GM12878 (cell line): ENCODE measurements at regions of chr19 and their contacts with region 1.

Region 1: GRCh38 chr19:16467581-16467980 is 4.2 kb downstream of the EPS15L1 start:
- DNase-seq: no peak
- ATAC-seq: no peak
- H3K4me3 ChIP-seq: no peak overlapping the region
- H3K27ac ChIP-seq: no peak overlapping the region; the same call in 1 of the 2 replicates
- H3K4me1 ChIP-seq: peaks cover 20% of the 10 kb centered on the region; the same call in 1 of the 2 replicates
- H3K27me3 ChIP-seq: no peaks in the 10 kb centered on the region
- CTCF ChIP-seq: no peak
- EP300 ChIP-seq: no peak
- POLR2A ChIP-seq: no peak
- RAD21 ChIP-seq: no peak

Region 2: GRCh38 chr19:16452347-16452878 is 15.2 kb before region 1 on chr19:
- CTCF ChIA-PET with region 1: interaction called, 5 read pairs
- POLR2A ChIA-PET with region 1: interaction called, 14 read pairs
- RAD21 ChIA-PET with region 1: interaction called, 4 read pairs
- SMC1A ChIA-PET with region 1: interaction called, 9 read pairs
- in situ Hi-C with region 1: no loop called
- intact Hi-C with region 1: no loop called
- DNase-seq: no peak
- ATAC-seq: no peak
- H3K4me3 ChIP-seq: no peak overlapping the region
- H3K27ac ChIP-seq: no peak overlapping the region
- H3K4me1 ChIP-seq: peaks cover 48% of the 10 kb centered on the region
- H3K27me3 ChIP-seq: no peaks in the 10 kb centered on the region; a peak in 1 of 4 replicates
- CTCF ChIP-seq: no peak
- EP300 ChIP-seq: no peak
- POLR2A ChIP-seq: no peak
- RAD21 ChIP-seq: no peak

Region 3: GRCh38 chr19:16504271-16504670 is 36.7 kb after region 1 on chr19:
- CTCF ChIA-PET with region 1: no interaction called
- POLR2A ChIA-PET with region 1: no interaction called
- RAD21 ChIA-PET with region 1: no interaction called
- SMC1A ChIA-PET with region 1: no interaction called
- in situ Hi-C with region 1: no loop called
- intact Hi-C with region 1: no loop called
- DNase-seq: no peak
- ATAC-seq: no peak
- H3K4me3 ChIP-seq: no peak overlapping the region
- H3K27ac ChIP-seq: no peak overlapping the region
- H3K4me1 ChIP-seq: no peaks in the 10 kb centered on the region
- H3K27me3 ChIP-seq: no peaks in the 10 kb centered on the region
- CTCF ChIP-seq: no peak
- EP300 ChIP-seq: no peak
- POLR2A ChIP-seq: no peak
- RAD21 ChIP-seq: no peak